ENCODE measurements at regions of chr15 and their contacts with region 1.

Region 1: DNA sequence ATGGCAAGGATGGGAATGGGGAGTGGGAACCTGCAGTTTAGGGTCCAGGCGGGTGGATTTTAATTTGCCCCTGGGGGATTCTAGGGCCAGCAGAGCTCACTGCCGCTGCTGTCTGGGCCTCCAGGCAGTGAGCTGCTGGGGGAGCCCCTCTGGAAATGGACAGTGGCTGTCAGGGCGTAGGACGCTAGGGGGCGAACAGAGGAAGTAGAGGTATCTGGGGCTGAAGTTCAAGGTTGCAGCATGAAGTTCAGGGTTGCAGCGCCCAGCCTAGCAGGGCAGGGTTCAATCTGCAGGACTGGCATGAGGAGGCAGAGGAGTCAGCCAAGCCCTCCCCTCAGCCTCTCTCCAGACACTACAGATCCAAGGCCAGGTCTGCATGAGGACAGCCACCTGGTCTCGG is 49.6 kb downstream of the APBA2 start:
- DNase-seq: peak; percentile 60
- H3K4me3 Mint-ChIP-seq: no peak overlapping the region
- H3K27ac Mint-ChIP-seq: no peak overlapping the region
- H3K4me1 Mint-ChIP-seq: peaks cover 46% of the 10 kb centered on the region
- H3K27me3 Mint-ChIP-seq: no peaks in the 10 kb centered on the region

Region 2: DNA sequence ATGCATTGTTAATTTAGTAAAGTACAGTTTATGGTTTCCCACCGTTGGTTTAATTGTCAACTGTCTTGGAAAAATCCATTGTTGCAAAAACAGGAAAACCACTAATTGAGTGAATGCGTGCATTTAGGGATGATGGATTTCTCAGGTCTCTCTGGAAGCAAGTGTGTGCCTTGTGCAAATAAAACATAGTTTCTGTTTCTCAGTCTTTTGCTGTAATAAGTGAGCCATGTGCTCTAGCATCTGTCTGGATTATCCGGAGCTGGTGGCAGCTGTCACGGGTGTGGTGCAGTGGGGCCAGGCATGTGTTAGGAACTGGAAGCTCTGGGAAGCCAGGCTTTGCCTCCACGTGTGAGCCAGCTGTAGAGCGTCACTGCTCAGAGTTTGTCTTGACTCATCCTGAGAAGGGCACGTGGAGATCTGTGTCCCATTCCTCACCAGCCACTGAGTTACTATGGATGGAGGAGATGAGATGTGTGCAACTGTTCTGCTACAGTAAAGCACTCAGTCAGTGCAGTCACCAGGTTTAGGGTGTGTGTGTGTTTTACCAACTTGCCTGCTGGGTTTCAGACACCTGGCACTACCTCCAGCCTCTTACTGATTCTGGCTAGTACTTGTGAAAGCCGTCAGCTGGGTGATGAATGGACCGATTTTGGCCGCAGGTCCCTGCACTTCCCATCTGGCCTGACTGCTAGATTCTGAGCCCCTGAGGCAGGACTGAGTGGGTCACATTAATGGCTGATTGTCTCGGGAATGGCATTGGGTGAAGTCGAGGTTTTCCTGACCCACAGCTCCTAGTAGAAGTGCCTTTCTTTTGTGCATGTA is 42.3 kb before region 1 on chr15:
- CTCF ChIA-PET with region 1: no interaction called
- POLR2A ChIA-PET with region 1: no interaction called
- intact Hi-C with region 1: loop called (anchors 5 kb)
- DNase-seq: no peak
- H3K4me3 Mint-ChIP-seq: no peak overlapping the region
- H3K27ac Mint-ChIP-seq: no peak overlapping the region
- H3K4me1 Mint-ChIP-seq: peaks cover 46% of the 10 kb centered on the region
- H3K27me3 Mint-ChIP-seq: no peaks in the 10 kb centered on the region

Region 3: GRCh38 chr15:28948036-28948435 is 12.7 kb after region 1 on chr15:
- CTCF ChIA-PET with region 1: interaction called, 3 read pairs
- POLR2A ChIA-PET with region 1: no interaction called
- intact Hi-C with region 1: loop called (anchors 1 kb)
- DNase-seq: no peak
- H3K4me3 Mint-ChIP-seq: no peak overlapping the region
- H3K27ac Mint-ChIP-seq: no peak overlapping the region
- H3K4me1 Mint-ChIP-seq: peaks cover 34% of the 10 kb centered on the region
- H3K27me3 Mint-ChIP-seq: no peaks in the 10 kb centered on the region

Region 4: GRCh38 chr15:28960979-28961378 is 25.7 kb after region 1 on chr15:
- CTCF ChIA-PET with region 1: no interaction called
- POLR2A ChIA-PET with region 1: no interaction called
- intact Hi-C with region 1: loop called (anchors 2 kb)
- DNase-seq: no peak
- H3K4me3 Mint-ChIP-seq: no peak overlapping the region
- H3K27ac Mint-ChIP-seq: no peak overlapping the region
- H3K4me1 Mint-ChIP-seq: peaks cover 10% of the 10 kb centered on the region
- H3K27me3 Mint-ChIP-seq: no peaks in the 10 kb centered on the region

Region 5: GRCh38 chr15:28994831-28995596 is 59.7 kb after region 1 on chr15:
- CTCF ChIA-PET with region 1: no interaction called
- POLR2A ChIA-PET with region 1: no interaction called
- intact Hi-C with region 1: no loop called
- DNase-seq: no peak
- H3K4me3 Mint-ChIP-seq: no peak overlapping the region
- H3K27ac Mint-ChIP-seq: no peak overlapping the region
- H3K4me1 Mint-ChIP-seq: peaks cover 5% of the 10 kb centered on the region
- H3K27me3 Mint-ChIP-seq: no peaks in the 10 kb centered on the region